Activated T-helper 2 cell treated with anti-CD3 and anti-CD28 coated beads, Interferon-gamma antibody, Interleukin-2, Interleukin-4, amounts not matched to agents 10 μg/mL and 5 μg/mL and 100 μg/mL, durations not matched to agents 14 hours and 24 hours and 36 hours (primary cell): ENCODE measurements at regions of chr6 and their contacts with region 1.

Region 1: GRCh38 chr6:53718597-53719460 is 53.3 kb upstream of the KLHL31 start:
- DNase-seq: peak; percentile 25
- H3K4me3 Mint-ChIP-seq: no peak overlapping the region
- H3K27ac Mint-ChIP-seq: no peak overlapping the region
- H3K4me1 Mint-ChIP-seq: peaks cover 8% of the 10 kb centered on the region
- H3K27me3 Mint-ChIP-seq: peaks cover 24% of the 10 kb centered on the region

Region 2: GRCh38 chr6:53734473-53735299 is 15.9 kb after region 1 on chr6:
- intact Hi-C with region 1: loop called (anchors 2 kb)
- DNase-seq: peak; percentile 32
- H3K4me3 Mint-ChIP-seq: peak overlapping the region; percentile 30
- H3K27ac Mint-ChIP-seq: peak overlapping the region; percentile 24
- H3K4me1 Mint-ChIP-seq: peaks cover 44% of the 10 kb centered on the region
- H3K27me3 Mint-ChIP-seq: no peaks in the 10 kb centered on the region

Region 3: DNA sequence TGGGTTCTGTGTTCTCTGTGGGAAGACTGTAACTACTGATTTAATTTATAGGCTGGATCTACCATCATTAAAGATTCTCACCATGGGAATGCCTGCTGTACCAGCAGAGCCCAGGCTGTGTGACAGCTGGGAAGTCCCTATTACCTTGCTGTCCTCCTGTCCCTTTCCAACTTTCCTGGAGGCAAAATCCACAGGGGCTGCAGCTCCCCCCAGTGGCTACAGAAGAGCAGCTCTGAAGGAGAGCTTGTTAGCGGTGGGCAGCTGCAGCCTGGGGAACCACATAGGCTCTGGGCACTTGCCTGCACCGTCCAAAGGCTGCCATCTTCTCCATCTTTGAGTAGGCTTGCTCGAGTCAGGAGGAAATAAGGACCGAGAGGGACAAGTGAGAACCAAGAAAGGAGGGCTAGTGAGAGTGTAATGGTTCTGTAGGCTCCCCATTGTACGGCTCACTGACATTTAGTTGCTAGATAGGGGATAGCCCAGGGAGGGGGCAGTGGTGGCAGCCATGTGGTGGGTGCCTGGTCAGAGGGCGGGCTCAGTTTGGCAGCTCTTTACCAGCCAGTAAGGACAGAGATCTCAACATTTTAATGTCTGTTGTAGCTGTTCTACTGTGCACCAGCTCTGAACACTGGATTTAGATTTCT is 237.4 kb after region 1 on chr6:
- intact Hi-C with region 1: loop called (anchors 5 kb)
- DNase-seq: no peak
- H3K4me3 Mint-ChIP-seq: no peak overlapping the region
- H3K27ac Mint-ChIP-seq: no peak overlapping the region
- H3K4me1 Mint-ChIP-seq: no peaks in the 10 kb centered on the region
- H3K27me3 Mint-ChIP-seq: peaks cover 11% of the 10 kb centered on the region